ENCODE measurements at regions of chr1 and their contacts with region 1.

Region 1: DNA sequence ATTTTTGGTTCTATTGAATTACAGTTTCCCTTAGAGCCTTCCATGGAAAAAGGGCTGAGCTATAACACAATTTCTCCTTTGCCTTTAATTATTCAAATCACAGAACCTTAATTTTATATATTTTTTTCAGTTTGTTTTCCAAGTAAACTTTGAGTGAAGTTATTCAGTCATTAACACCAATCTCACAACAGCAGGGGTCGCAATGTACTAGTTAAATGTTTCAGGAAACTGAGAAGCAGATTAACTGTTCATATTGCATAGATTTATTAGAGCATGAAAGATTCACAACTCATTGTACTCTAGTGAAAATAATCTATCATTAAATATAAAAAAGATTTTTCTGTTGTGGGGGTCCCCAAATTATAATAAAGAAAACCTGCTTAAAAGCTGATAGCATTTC is 64.1 kb downstream of the KIFAP3 start:
- DNase-seq: peak in 5 of 7 donors; percentile 17 to 56 (median 44)
- H3K4me3 ChIP-seq: no peak overlapping the region
- H3K27ac ChIP-seq: no peak overlapping the region
- H3K4me1 ChIP-seq: no peaks in the 10 kb centered on the region
- H3K27me3 ChIP-seq: no peaks in the 10 kb centered on the region
- CTCF ChIP-seq: peak in 5 of 6 experiments; percentile 15 to 49 (median 36)
- POLR2A ChIP-seq: no peak

Region 2: DNA sequence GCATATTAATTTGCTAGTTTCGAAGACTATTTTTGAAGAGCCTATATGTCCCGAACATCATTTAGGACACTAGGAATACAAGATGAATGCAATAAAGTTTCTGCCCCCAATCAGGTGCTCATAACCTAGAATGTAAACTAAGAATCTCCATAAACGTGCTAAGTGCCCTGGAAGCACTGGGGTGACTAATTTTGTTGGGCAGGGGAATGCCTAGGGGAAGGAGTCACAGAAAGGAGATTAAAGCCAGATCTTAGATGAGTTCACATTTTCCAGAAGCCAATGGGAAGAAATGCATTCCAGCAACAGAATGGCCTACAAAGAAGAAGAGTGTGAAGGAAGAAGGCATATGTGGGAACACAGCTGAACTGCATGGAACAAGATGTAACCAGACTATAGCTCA is 136.2 kb before region 1 on chr1:
- intact Hi-C with region 1: no loop called
- DNase-seq: no peak
- H3K4me3 ChIP-seq: no peak overlapping the region
- H3K27ac ChIP-seq: no peak overlapping the region
- H3K4me1 ChIP-seq: no peaks in the 10 kb centered on the region
- H3K27me3 ChIP-seq: no peaks in the 10 kb centered on the region
- CTCF ChIP-seq: no peak
- POLR2A ChIP-seq: no peak

Region 3: GRCh38 chr1:170445096-170445495 is 434.7 kb after region 1 on chr1:
- intact Hi-C with region 1: no loop called
- DNase-seq: no peak
- H3K4me3 ChIP-seq: no peak overlapping the region
- H3K27ac ChIP-seq: no peak overlapping the region
- H3K4me1 ChIP-seq: no peaks in the 10 kb centered on the region
- H3K27me3 ChIP-seq: no peaks in the 10 kb centered on the region
- CTCF ChIP-seq: no peak
- POLR2A ChIP-seq: no peak

Region 4: DNA sequence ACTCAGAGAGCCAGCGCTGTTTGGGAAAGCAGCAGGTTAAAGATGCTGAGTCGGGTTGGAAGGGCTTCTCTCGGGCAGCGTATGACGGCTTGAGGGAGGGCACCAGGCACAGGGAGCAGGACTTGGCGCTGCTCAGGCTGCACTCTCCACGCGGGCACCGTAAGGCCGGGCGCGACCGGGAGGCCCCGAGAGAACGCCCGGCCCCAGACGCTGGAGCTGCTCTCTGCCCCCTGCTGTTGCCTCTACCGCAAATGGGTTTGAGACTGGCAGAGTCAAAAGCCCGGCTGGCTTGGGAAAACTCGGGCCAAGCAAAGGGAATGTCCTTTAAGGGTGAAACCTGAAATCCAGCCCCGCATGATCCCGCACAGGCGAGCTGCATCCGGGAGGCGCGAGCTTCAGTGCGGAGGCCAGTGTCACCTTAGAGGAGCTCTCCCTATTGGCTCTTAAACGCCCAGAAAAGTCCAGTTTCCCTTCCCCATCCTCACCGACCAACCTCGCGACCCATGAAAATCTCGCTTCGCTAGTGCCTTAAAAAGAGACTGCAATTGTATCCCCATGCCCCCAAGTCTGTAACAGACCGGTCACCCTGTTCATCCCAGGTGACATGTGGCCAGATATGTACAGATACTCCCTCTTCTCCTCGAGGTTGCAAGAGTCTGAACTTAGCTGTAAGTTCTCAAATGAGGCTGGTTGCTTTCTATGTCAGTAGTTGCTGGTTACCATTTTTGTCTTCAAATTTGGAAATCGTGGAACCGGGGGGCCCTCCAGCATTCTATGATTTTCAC is 654.6 kb after region 1 on chr1:
- intact Hi-C with region 1: loop called in 1 of 2 experiments (anchors 5 kb)
- DNase-seq: peak in 6 of 7 donors; percentile 46 to 63 (median 56)
- H3K4me3 ChIP-seq: peak overlapping the region in 2 of 4 donors; percentile 47 to 68
- H3K27ac ChIP-seq: peak overlapping the region in 2 of 5 donors; percentile 70 to 82
- H3K4me1 ChIP-seq: peaks cover 0 to 9% of the 10 kb centered on the region in 2 donors
- H3K27me3 ChIP-seq: peaks cover 48% of the 10 kb centered on the region
- CTCF ChIP-seq: peak in 3 of 6 experiments; percentile 4 to 22 (median 21)
- POLR2A ChIP-seq: peak in 1 of 2 donors; percentile 33

Region 5: DNA sequence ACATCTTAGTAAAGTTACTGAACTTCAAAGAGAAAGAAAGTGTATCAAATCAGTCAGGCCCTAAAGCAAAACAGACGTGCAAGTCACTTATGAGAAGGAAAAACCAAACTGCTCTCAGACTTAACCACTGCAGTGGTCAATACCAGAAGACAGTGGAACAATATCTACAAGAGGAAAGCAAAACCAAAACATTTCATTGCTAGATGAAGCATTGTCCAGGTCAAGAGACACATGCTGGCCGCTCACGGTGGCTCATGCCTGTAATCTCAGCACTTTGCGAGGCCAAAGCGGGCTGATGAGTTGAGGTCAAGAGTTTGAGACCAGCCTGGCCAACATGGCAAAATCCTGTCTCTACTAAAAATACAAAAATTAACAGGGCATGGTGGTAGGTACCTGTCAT is 842.9 kb after region 1 on chr1:
- intact Hi-C with region 1: no loop called
- DNase-seq: no peak
- H3K4me3 ChIP-seq: no peak overlapping the region
- H3K27ac ChIP-seq: no peak overlapping the region
- H3K4me1 ChIP-seq: peaks cover 0 to 7% of the 10 kb centered on the region in 2 donors
- H3K27me3 ChIP-seq: no peaks in the 10 kb centered on the region
- CTCF ChIP-seq: no peak
- POLR2A ChIP-seq: no peak